ENCODE measurements at regions of chr5 and their contacts with region 1.

Region 1: GRCh38 chr5:96752341-96753016 is 55.3 kb downstream of the ERAP1 start:
- H3K4me3 ChIP-seq: no peak overlapping the region
- H3K27ac ChIP-seq: no peak overlapping the region
- H3K4me1 ChIP-seq: no peaks in the 10 kb centered on the region
- CTCF ChIP-seq: peak; percentile 29; the same call in 1 of the 2 replicates

Region 2: DNA sequence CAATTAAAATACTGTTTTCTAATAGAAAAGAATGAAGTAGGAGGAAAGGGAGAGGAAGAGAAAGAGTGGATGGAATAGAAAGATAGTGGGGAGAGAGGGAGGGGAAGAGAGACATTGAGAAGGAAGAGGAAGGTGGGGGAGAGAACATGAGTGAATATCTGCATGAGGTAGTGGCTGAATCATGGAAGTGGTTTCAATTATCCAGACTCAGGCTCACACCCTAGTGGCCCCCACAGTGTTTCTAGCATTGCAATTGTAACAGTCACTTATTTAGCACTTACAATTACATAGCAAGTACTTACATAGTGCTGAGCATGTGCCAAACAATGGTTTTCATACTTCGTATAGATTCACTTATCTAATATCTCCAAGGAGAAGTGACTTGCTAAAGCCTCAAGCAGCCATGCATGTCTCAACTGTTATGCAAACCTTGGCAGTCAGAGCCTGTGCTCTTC is 17.6 kb before region 1 on chr5:
- CTCF ChIA-PET with region 1: no interaction called
- POLR2A ChIA-PET with region 1: no interaction called
- H3K4me3 ChIP-seq: no peak overlapping the region
- H3K27ac ChIP-seq: no peak overlapping the region
- H3K4me1 ChIP-seq: no peaks in the 10 kb centered on the region
- CTCF ChIP-seq: no peak

Region 3: DNA sequence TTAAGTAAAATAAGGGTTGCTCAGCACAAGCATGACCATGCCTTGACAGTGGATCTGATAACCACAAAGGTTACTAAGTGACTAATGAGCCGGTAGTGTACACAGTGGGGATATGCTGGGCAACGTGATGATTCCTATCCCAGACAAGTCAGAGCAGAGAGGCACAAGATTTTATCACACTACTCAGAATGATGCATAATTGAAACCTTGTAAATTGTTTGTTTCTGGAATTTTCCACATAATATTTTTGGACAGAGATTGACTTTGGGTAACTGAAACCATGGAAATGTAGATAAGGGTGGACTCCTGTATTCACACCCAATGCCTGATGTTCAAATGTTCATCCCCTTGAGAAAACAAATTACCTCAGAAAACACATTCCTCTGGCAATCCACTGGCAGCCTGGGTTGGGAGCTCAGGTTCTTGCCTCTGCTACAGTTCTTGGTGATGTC is 71.4 kb after region 1 on chr5:
- CTCF ChIA-PET with region 1: no interaction called
- POLR2A ChIA-PET with region 1: no interaction called
- H3K4me3 ChIP-seq: no peak overlapping the region
- H3K27ac ChIP-seq: no peak overlapping the region
- H3K4me1 ChIP-seq: no peaks in the 10 kb centered on the region; the same call in 1 of the 2 replicates
- CTCF ChIP-seq: no peak

Region 4: DNA sequence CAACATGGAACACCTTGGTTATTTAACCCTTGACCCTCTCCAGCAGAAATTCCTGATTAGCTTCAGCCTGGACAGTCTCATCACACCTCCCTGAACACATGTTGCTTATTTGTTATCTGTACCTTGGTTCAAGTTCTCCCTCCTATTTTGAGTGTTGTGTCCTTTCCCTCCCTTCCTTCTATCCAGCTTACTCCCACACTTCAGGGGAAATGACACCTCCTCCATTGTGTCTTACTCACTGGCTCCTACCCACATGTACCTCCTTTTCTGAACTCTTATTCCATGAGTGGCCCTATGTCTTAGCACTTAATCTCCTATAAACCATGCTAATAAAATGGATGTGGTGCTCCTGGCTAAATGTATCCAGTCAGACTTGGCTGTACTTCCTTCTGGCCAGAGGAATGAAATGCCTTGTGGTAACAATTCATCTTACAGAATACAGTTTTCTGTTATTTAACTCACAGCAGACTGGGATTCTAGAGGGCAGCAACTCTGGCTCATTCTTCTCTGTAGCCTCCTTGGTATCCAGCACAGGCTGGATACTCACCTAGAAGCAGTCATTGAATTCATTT is 378.7 kb after region 1 on chr5:
- CTCF ChIA-PET with region 1: no interaction called
- POLR2A ChIA-PET with region 1: no interaction called
- H3K4me3 ChIP-seq: no peak overlapping the region
- H3K27ac ChIP-seq: no peak overlapping the region
- H3K4me1 ChIP-seq: no peaks in the 10 kb centered on the region
- CTCF ChIP-seq: no peak

Region 5: DNA sequence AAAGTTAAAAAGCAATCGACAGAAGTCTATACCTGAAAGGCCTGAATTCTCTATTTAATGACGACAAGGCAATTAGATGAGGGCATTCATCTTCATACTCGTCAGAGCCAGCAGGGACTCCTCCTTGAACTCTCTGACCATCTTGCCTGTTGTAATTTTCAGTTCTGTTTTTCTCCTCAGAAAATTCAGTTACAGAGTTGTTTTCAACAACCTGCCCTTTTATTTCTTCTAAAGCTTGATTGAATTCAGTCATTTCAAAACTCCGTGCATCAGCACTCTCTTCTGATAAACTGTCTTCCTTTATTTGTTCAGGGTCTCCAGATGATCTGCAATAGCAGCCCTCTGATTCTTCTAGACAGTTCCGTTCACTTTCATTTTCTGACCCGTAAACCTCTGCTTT is 415.0 kb after region 1 on chr5:
- CTCF ChIA-PET with region 1: interaction called, 32 read pairs
- POLR2A ChIA-PET with region 1: interaction called, 3 read pairs
- H3K4me3 ChIP-seq: no peak overlapping the region
- H3K27ac ChIP-seq: no peak overlapping the region
- H3K4me1 ChIP-seq: no peaks in the 10 kb centered on the region
- CTCF ChIP-seq: no peak

Measured in HEK293 (cell line).